ENCODE measurements at regions of chr9 and their contacts with region 1.

Region 1: GRCh38 chr9:126500684-126501382 is 112.9 kb upstream of the LMX1B start:
- DNase-seq: peak; percentile 70
- H3K4me3 Mint-ChIP-seq: no peak overlapping the region
- H3K27ac Mint-ChIP-seq: no peak overlapping the region
- H3K4me1 Mint-ChIP-seq: peaks cover 5% of the 10 kb centered on the region
- H3K27me3 Mint-ChIP-seq: peaks cover 13% of the 10 kb centered on the region

Region 2: GRCh38 chr9:126514047-126514821 is 13.4 kb after region 1 on chr9:
- CTCF ChIA-PET with region 1: interaction called, 17 read pairs
- POLR2A ChIA-PET with region 1: no interaction called
- DNase-seq: peak; percentile 63
- H3K4me3 Mint-ChIP-seq: no peak overlapping the region
- H3K27ac Mint-ChIP-seq: no peak overlapping the region
- H3K4me1 Mint-ChIP-seq: peaks cover 35% of the 10 kb centered on the region
- H3K27me3 Mint-ChIP-seq: peaks cover 68% of the 10 kb centered on the region

Region 3: DNA sequence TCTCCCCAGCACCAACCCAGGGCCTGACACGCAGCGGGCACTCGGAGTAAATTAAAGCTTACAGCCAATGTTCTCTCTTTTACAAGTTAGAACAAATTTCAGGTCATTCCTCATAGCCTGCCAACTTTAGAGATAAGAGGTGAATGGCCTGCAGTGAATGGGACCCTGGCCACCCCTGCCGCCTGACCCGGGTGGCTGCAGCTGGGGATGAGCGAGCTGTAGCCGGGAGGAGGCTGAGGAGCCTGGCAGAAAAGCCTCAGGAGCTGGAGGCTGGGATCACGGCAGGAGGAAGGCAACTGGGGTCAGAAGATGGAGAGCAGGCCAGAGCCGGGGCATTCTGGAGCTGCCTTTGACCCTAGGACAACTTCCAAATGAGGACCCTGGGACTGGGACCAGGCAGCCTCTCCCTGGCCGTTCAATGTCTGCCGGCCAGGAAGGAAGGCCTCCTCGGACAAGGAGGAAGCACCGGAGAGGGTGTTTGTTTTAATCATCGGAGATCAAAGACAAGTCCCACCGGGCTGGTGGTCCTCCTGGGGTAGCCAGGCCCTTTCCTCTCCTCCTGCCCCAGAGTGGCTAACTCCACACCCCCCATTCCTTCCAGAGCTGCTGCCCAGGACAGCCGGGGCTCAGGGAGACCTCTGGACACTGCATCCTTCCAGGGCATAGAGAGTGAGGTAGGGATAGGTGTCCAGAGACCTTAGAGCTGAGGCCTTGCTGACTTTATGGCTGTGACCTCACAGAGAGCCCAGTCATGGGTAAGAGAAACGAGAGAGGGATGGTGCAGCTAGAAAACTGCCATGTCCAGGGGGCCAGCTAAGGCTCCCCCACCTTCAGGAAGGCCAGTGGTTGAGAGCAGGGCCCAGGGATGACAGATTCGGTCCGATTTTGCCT is 25.6 kb after region 1 on chr9:
- CTCF ChIA-PET with region 1: interaction called, 10 read pairs
- POLR2A ChIA-PET with region 1: no interaction called
- DNase-seq: no peak
- H3K4me3 Mint-ChIP-seq: no peak overlapping the region
- H3K27ac Mint-ChIP-seq: no peak overlapping the region
- H3K4me1 Mint-ChIP-seq: peaks cover 28% of the 10 kb centered on the region
- H3K27me3 Mint-ChIP-seq: peaks cover 40% of the 10 kb centered on the region

Region 4: DNA sequence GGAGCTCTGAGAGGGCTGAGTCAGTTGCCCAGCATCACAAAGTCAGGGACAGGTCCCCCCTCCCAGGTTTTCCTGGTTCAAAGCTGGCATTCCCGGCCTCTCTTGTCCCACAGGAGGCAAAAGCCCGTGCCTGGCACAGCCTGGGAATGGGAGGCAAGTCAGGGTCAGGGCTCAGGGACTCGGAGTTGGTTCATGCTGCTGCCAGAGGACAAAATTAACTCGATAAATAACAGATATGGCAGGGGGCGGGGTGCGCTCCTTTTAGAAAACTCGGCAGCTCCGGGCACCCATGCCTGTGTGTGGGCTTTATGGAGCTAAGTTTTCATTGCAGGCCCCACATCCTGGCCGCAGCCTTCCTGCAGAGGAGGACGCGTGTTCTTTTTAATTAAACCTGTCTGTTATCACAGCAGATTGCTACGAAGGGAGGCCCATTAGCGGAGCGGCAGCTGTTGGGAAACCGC is 50.1 kb after region 1 on chr9:
- CTCF ChIA-PET with region 1: interaction called, 99 read pairs
- POLR2A ChIA-PET with region 1: interaction called, 3 read pairs
- DNase-seq: no peak
- H3K4me3 Mint-ChIP-seq: no peak overlapping the region
- H3K27ac Mint-ChIP-seq: no peak overlapping the region
- H3K4me1 Mint-ChIP-seq: no peaks in the 10 kb centered on the region
- H3K27me3 Mint-ChIP-seq: peaks cover 3% of the 10 kb centered on the region

Region 5: GRCh38 chr9:126558051-126558665 is 57.3 kb after region 1 on chr9:
- CTCF ChIA-PET with region 1: interaction called, 99 read pairs
- POLR2A ChIA-PET with region 1: interaction called, 5 read pairs
- DNase-seq: peak; percentile 73
- H3K4me3 Mint-ChIP-seq: no peak overlapping the region
- H3K27ac Mint-ChIP-seq: no peak overlapping the region
- H3K4me1 Mint-ChIP-seq: no peaks in the 10 kb centered on the region
- H3K27me3 Mint-ChIP-seq: peaks cover 35% of the 10 kb centered on the region

Region 6: GRCh38 chr9:126980231-126980630 is 479.4 kb after region 1 on chr9:
- CTCF ChIA-PET with region 1: no interaction called
- POLR2A ChIA-PET with region 1: no interaction called
- DNase-seq: no peak
- H3K4me3 Mint-ChIP-seq: no peak overlapping the region
- H3K27ac Mint-ChIP-seq: no peak overlapping the region
- H3K4me1 Mint-ChIP-seq: peaks cover 33% of the 10 kb centered on the region
- H3K27me3 Mint-ChIP-seq: peaks cover 21% of the 10 kb centered on the region

Measured in activated CD4-positive, alpha-beta memory T cell treated with anti-CD3 and anti-CD28 coated beads, Interleukin-2, amount 10 ng/mL, durations not matched to agents 7 days and 5 days (primary cell).